HepG2 (cell line): ENCODE measurements at regions of chr19 and their contacts with region 1.

Region 1: DNA sequence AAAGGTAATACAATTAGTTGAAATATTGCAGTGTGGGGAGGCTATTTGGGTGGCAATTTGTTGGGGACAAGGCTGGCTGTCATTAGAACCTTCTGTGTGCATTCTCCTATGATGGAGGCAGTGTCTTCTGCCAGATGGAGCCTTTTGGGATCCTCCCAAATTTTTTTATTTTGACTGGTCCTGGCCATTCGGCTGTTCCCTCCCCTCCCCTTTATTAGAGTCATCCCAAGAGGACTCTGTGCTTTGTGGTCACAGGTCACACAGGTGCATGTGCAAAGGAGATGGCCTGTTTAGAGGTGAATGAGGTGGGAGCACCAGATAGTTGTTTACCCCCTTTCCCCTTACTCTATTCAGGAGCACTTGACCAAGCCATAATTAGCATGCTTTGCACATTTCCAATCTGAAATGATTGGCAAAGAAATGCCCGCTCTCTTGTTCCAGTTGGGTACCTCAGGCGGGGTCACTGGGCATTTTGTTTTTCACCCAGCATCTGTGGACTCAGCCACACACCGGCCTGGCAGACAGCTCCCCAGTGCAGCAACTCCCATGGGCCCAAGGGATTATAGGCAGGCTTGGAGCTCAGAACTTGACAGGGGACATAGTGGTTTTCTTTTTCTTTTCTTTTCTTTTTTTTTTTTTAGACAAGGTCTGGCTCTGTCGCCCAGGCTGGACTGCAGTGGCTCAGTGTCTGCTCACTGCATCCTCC is 19.8 kb downstream of the GATAD2A start:
- DNase-seq: no peak
- ATAC-seq: no peak
- H3K4me3 ChIP-seq: no peak overlapping the region
- H3K27ac ChIP-seq: no peak overlapping the region
- H3K4me1 ChIP-seq: peaks cover 14% of the 10 kb centered on the region
- H3K27me3 ChIP-seq: no peaks in the 10 kb centered on the region
- CTCF ChIP-seq: no peak
- EP300 ChIP-seq: no peak
- POLR2A ChIP-seq: no peak
- RAD21 ChIP-seq: no peak

Region 2: DNA sequence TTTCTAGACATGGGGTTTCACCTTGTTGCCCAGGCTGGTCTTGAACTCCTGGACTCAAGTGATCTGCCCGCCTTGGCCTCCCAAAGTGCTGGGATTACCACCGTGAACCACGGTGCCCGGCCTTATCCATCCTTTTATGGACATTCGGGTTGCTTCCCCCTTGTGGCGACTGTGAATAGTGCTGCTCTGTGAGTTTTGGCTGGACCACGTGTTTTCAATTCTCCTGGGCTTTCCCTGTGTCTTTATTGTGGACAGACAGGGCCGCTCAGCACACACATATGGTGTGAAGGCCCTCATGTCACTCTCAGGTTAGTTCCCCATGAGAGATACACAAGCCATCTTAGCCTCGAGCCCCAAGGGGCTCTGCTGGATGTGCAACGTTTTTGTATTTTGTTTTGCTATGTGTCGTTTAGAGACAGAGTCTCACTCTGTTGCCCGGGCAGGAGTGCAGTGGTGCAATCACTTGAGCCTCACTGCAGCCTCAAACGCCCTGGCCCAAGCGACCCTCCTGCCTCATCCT is 64.2 kb before region 1 on chr19:
- CTCF ChIA-PET with region 1: no interaction called
- POLR2A ChIA-PET with region 1: no interaction called
- in situ Hi-C with region 1: no loop called
- intact Hi-C with region 1: no loop called
- DNase-seq: peak; percentile 83
- ATAC-seq: peak; percentile 85
- H3K4me3 ChIP-seq: no peak overlapping the region
- H3K27ac ChIP-seq: peak overlapping the region; percentile 21
- H3K4me1 ChIP-seq: peaks cover 29% of the 10 kb centered on the region
- H3K27me3 ChIP-seq: no peaks in the 10 kb centered on the region
- CTCF ChIP-seq: peak; percentile 86
- EP300 ChIP-seq: no peak
- POLR2A ChIP-seq: no peak
- RAD21 ChIP-seq: peak; percentile 39; the same call in 1 of the 2 replicates

Region 3: DNA sequence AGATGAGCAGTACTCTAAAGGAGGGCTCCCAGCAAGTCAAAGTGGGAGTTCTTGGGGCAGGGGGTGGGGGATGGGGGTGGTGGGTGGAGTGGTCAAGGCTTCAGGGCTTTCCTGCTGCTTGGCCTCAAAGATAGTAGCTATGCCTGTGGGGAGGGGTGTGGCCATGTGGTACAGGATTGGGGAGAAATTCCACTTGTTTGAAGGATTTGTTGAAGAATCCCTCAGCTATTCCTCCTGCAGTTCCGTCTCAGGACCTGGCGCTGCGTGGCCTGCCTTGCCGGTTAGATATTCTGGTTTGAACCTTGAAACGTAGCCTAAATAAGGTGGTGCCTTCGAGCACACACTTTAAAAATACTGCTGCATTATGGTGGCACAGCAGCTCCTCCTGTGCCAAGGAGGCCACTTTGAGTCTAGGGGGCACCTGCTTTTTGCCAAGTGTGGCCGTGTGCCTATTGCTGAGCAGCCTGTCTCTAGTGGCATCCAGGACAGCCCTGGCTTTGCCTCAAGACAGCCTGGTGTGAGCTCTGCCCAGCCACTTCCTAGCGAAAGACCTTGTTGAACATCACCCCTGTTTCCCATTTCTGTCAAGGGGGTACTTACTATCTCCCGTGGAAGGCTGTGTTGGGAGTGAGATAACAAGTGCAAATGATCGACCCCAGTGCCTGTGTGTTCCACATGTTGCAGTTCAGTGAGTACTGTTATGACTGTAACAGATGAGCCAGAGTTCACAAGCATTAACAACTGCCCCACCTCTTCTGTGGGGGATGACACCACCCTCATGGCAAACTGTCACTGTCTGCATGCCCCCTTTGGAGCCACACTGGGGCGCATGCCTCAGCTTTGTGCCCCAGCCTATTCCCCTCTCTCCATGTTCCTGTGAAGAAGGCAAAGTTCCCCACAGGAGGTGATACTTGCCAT is 14.8 kb before region 1 on chr19:
- CTCF ChIA-PET with region 1: no interaction called
- POLR2A ChIA-PET with region 1: no interaction called
- in situ Hi-C with region 1: no loop called
- intact Hi-C with region 1: no loop called
- DNase-seq: no peak
- ATAC-seq: peak; percentile 19; the same call in 1 of the 3 replicates
- H3K4me3 ChIP-seq: no peak overlapping the region
- H3K27ac ChIP-seq: no peak overlapping the region
- H3K4me1 ChIP-seq: peaks cover 48% of the 10 kb centered on the region
- H3K27me3 ChIP-seq: no peaks in the 10 kb centered on the region; a peak in 1 of 5 replicates
- CTCF ChIP-seq: no peak
- EP300 ChIP-seq: no peak
- POLR2A ChIP-seq: no peak
- RAD21 ChIP-seq: no peak

Region 4: DNA sequence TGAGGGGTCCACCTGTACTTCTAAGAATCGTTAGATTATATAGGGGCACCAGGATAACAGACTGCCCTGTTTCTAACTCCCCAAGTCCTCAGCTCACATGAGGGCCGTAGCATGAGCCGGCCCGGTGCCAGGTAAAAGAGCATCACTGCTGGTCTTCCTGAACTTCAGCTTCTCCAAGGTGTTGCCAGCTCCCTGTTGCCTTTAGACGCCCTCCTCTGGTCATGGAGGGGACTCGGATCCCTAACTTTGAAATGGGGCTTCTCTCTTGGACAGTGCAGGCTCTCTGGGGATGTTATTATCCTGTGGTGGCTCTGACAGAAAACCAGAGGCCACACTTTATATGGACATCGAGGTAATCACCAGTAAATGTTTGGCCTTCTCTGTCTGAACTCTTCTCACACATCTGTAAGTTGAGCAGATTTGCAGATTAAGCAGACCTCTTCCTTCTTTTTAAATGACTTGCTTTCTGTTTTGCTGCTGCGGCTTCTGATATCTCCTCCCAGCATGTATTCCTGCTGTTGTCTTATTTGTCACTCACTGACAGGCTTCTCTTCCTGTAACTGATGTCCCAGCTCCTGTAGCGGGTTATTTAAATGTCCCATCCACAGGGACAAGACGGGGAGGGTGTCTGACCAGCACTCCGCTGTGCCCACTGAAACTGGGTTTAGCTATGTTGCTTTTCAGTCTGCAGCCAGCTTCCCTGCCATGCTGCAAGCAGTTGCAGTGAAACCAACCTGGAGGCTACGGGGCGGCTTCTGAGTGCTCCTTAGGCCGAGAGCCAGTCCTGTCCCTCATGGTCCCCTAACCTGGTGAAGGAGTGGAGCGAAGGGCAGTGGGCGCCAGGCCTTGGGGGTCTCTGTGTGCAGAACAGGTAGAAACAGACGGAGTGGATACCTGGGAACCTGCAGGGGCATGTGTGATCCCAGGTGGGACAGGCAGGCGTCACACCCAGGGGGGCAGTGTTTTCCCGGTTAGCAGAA is 50.8 kb after region 1 on chr19:
- CTCF ChIA-PET with region 1: no interaction called
- POLR2A ChIA-PET with region 1: no interaction called
- in situ Hi-C with region 1: no loop called
- intact Hi-C with region 1: loop called (anchors 2 kb)
- DNase-seq: peak; percentile 16
- ATAC-seq: peak; percentile 71
- H3K4me3 ChIP-seq: no peak overlapping the region
- H3K27ac ChIP-seq: no peak overlapping the region
- H3K4me1 ChIP-seq: no peaks in the 10 kb centered on the region
- H3K27me3 ChIP-seq: no peaks in the 10 kb centered on the region
- CTCF ChIP-seq: peak; percentile 33; the same call in 1 of the 2 replicates
- EP300 ChIP-seq: no peak
- POLR2A ChIP-seq: no peak
- RAD21 ChIP-seq: no peak

Region 5: DNA sequence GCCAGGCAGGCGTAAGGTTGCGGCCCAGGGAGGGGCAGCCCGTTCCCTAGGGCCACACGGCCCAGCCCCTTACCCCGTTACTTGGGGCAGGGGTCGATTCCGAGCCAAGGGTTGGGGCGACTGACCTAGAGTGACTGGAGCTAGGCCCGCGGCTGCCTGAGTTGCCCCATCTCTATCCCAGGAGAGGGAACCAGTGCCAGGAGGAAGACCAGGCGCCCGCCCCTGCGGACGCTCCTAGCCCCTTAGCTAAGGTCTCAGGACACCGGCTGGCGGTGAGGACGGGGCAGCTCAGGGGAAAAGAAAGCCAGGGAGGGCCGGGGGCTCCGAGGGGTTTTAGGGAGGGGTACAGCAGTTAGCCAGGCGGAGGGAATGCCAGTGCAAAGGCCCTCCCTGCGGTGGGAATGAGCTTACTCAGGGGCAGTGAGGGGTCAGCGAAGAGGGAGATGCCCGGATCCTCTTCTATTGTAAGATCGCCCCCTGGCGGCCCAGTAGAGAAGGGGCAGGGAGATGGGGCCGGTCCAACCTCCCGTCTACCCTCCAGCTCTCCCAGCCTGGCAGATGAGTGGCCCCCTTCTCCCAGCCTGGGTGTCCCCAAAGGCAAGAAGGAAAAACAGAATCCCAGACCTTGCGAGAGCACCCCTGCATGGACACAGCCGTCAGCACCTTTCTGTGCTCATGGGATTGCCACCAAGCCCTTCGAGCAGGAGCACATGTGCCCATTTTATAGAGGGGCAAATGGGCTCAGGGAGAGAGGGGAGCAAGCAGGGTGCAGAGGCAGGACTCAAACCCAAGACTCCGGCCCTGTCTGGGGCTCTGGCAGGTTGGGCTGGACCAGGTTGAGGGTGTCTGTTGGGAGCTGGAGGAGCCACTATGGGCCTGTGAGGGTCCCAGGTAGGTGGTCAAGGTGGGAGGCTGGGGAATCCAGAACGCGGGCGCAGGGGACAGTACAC is 129.0 kb after region 1 on chr19:
- CTCF ChIA-PET with region 1: no interaction called
- POLR2A ChIA-PET with region 1: no interaction called
- in situ Hi-C with region 1: no loop called
- intact Hi-C with region 1: no loop called
- DNase-seq: no peak
- ATAC-seq: peak; percentile 58
- H3K4me3 ChIP-seq: no peak overlapping the region
- H3K27ac ChIP-seq: no peak overlapping the region
- H3K4me1 ChIP-seq: no peaks in the 10 kb centered on the region
- H3K27me3 ChIP-seq: peaks cover 4 to 35% of the 10 kb centered on the region in 2 experiments; a peak in 4 of 5 replicates
- CTCF ChIP-seq: peak; percentile 68
- EP300 ChIP-seq: no peak
- POLR2A ChIP-seq: no peak
- RAD21 ChIP-seq: no peak